CD8-positive, alpha-beta T cell (primary cell): ENCODE measurements at regions of chr5 and their contacts with region 1.

Region 1: DNA sequence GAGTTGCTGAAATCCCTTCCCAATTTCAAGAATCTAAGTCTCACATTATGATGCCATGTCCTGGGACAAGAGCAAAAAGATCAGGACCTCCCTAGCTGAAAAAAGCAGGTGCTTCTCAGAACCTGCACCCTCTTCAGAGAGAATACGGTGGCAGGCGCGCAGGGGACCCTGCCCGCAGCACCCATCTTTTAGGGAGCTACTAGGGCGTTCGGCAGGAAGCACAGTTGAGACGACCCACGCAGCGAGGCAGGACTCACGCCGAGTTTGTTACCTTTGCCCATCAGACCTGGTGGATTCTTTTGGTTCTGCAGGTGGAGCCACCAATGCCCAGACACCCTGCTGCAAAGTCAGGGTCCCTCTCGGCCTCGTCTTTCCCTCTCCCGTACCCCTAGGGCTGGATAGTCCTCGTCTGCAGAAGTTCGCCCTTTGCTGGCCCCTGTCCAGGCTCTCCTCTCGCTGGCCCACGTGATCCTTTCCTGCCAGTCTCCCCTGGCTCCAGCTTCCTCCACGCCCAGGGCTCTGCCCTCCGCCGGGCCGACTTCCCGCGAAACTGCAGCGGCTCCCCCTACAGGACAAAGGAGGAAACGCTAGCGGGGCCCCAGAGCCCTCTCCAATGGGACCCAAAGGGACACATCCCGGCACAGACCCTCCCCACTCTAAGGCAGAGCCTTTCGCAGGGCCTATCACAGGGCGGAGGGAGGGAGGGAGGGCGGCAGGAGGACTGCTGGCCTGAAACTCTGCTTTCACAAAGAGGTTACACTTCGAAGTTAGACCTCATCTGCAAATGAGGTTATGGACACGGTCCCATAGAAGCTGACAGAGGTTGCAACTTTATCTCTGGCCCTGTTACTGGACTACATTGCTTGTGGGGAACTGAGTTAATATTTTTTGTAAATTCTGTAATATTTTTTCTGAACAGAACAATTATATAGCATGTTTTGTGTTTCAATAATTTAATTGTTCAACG is 28.8 kb downstream of the TMEM174 start:
- DNase-seq: peak; percentile 35 to 81 (median 68)
- ATAC-seq: peak; percentile 89
- H3K4me3 ChIP-seq: no peak overlapping the region
- H3K4me3 Mint-ChIP-seq: peak overlapping the region; percentile 20
- H3K27ac ChIP-seq: no peak overlapping the region
- H3K27ac Mint-ChIP-seq: no peak overlapping the region
- H3K4me1 ChIP-seq: peaks cover 14% of the 10 kb centered on the region
- H3K4me1 Mint-ChIP-seq: peaks cover 10% of the 10 kb centered on the region
- H3K27me3 ChIP-seq: peaks cover 3 to 9% of the 10 kb centered on the region in 2 experiments
- H3K27me3 Mint-ChIP-seq: peaks cover 68% of the 10 kb centered on the region
- CTCF ChIP-seq: peak; percentile 84

Region 2: GRCh38 chr5:71802673-71803072 is 1399.2 kb before region 1 on chr5:
- CTCF ChIA-PET with region 1: no interaction called
- POLR2A ChIA-PET with region 1: no interaction called
- intact Hi-C with region 1: no loop called
- DNase-seq: no peak
- ATAC-seq: no peak
- H3K4me3 ChIP-seq: no peak overlapping the region
- H3K4me3 Mint-ChIP-seq: no peak overlapping the region
- H3K27ac ChIP-seq: no peak overlapping the region
- H3K27ac Mint-ChIP-seq: no peak overlapping the region
- H3K4me1 ChIP-seq: no peaks in the 10 kb centered on the region
- H3K4me1 Mint-ChIP-seq: no peaks in the 10 kb centered on the region
- H3K27me3 ChIP-seq: no peaks in the 10 kb centered on the region
- H3K27me3 Mint-ChIP-seq: peaks cover 20% of the 10 kb centered on the region
- CTCF ChIP-seq: no peak

Region 3: GRCh38 chr5:71982717-71983395 is 1219.0 kb before region 1 on chr5:
- CTCF ChIA-PET with region 1: no interaction called
- POLR2A ChIA-PET with region 1: no interaction called
- intact Hi-C with region 1: no loop called
- DNase-seq: no peak
- ATAC-seq: no peak
- H3K4me3 ChIP-seq: no peak overlapping the region
- H3K4me3 Mint-ChIP-seq: no peak overlapping the region
- H3K27ac ChIP-seq: no peak overlapping the region
- H3K27ac Mint-ChIP-seq: no peak overlapping the region
- H3K4me1 ChIP-seq: no peaks in the 10 kb centered on the region
- H3K4me1 Mint-ChIP-seq: no peaks in the 10 kb centered on the region
- H3K27me3 ChIP-seq: no peaks in the 10 kb centered on the region
- H3K27me3 Mint-ChIP-seq: peaks cover 12% of the 10 kb centered on the region
- CTCF ChIP-seq: no peak

Region 4: DNA sequence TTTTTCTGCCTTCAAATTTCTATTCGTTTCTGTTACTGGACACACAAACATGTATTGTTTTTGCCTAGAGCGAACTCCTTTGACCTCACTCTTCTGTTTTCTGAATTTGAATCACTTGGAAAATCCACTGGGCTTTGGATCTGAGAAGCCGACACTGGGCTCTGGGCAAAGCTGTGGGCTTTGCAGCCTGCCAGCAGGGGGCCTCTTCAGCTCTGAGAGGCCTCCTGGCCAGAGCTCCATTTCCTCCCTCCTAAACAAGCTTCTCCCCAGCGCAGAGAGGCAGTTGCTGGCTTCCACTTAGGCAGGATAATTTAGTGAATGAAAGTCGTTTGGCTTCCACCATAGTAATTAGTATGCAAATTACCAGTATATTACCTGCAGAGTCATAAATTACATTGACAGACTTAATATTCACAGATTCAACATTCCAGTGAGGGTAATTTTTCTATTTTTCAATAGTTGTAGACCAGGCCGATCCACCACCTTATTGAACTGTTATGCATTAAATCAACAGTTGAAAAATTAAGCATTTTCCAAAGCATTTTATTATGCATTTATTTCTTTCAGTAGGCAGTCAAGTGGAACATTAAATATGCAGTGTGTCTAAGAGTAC is 590.6 kb before region 1 on chr5:
- CTCF ChIA-PET with region 1: interaction called, 3 read pairs
- POLR2A ChIA-PET with region 1: no interaction called
- intact Hi-C with region 1: loop called in 1 of 2 experiments (anchors 2 kb)
- DNase-seq: peak; percentile 1 to 56 (median 34)
- ATAC-seq: peak; percentile 62
- H3K4me3 ChIP-seq: no peak overlapping the region
- H3K4me3 Mint-ChIP-seq: no peak overlapping the region
- H3K27ac ChIP-seq: no peak overlapping the region
- H3K27ac Mint-ChIP-seq: no peak overlapping the region
- H3K4me1 ChIP-seq: no peaks in the 10 kb centered on the region
- H3K4me1 Mint-ChIP-seq: no peaks in the 10 kb centered on the region
- H3K27me3 ChIP-seq: no peaks in the 10 kb centered on the region
- H3K27me3 Mint-ChIP-seq: peaks cover 10% of the 10 kb centered on the region
- CTCF ChIP-seq: peak; percentile 74

Region 5: DNA sequence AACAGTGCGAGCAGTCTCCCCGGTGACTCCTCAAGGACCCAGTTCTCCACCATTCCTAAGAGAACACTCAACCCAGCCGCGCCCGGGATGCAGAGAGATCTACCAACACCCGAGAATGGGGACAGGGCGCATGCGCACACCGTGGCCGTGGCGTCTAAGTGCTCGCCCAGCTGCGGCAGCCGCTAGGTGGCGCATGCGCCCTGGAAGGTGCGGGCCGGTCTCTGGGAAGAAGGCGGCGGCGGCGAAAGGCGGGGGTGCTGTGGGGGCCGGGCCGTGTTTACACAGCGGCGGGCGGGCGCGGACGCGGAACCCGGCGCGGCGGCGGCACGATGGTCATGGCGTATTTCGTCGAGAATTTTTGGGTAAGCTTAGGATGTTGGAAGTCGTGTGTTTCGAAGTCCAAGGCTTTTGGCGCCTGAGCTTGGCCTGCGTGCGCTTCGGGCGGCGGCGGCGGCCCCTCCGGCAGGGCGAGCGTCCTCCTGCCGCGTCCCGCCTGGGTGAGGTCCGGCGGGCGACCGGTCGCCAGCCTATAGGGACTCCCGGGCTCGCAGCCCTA is 246.0 kb before region 1 on chr5 and contains the start of gene FCHO2:
- CTCF ChIA-PET with region 1: interaction called, 10 read pairs
- POLR2A ChIA-PET with region 1: interaction called, 3 read pairs
- intact Hi-C with region 1: loop called (anchors 1 to 5 kb)
- DNase-seq: peak; percentile 88 to 98 (median 96)
- ATAC-seq: peak; percentile 90
- H3K4me3 ChIP-seq: peak within 1 kb of the TSS; percentile 61 to 95
- H3K4me3 Mint-ChIP-seq: peak within 1 kb of the TSS; percentile 95
- H3K27ac ChIP-seq: no peak within 1 kb of the TSS
- H3K27ac Mint-ChIP-seq: peak within 1 kb of the TSS; percentile 88
- H3K4me1 ChIP-seq: peaks cover 12% of the 10 kb centered on the region
- H3K4me1 Mint-ChIP-seq: peaks cover 15% of the 10 kb centered on the region
- H3K27me3 ChIP-seq: peaks cover 6 to 9% of the 10 kb centered on the region in 2 experiments
- H3K27me3 Mint-ChIP-seq: peaks cover 41% of the 10 kb centered on the region
- CTCF ChIP-seq: peak; percentile 65
- total RNA-seq, gene FCHO2: 2.4 to 2.9 TPM

Region 6: GRCh38 chr5:73135429-73136054 is 66.3 kb before region 1 on chr5:
- CTCF ChIA-PET with region 1: interaction called, 3 read pairs
- POLR2A ChIA-PET with region 1: no interaction called
- intact Hi-C with region 1: loop called in 1 of 2 experiments (anchors 2 kb)
- DNase-seq: peak in 2 of 9 experiments; percentile 19 to 52
- ATAC-seq: peak; percentile 42
- H3K4me3 ChIP-seq: no peak overlapping the region
- H3K4me3 Mint-ChIP-seq: no peak overlapping the region
- H3K27ac ChIP-seq: no peak overlapping the region
- H3K27ac Mint-ChIP-seq: no peak overlapping the region
- H3K4me1 ChIP-seq: no peaks in the 10 kb centered on the region
- H3K4me1 Mint-ChIP-seq: peaks cover 3% of the 10 kb centered on the region
- H3K27me3 ChIP-seq: peaks cover 0 to 8% of the 10 kb centered on the region in 2 experiments
- H3K27me3 Mint-ChIP-seq: peaks cover 39% of the 10 kb centered on the region
- CTCF ChIP-seq: peak; percentile 28

Region 7: GRCh38 chr5:73215891-73216610 is 14.2 kb after region 1 on chr5:
- CTCF ChIA-PET with region 1: interaction called, 16 read pairs
- POLR2A ChIA-PET with region 1: no interaction called
- intact Hi-C with region 1: no loop called
- DNase-seq: peak; percentile 36 to 77 (median 56)
- ATAC-seq: peak; percentile 95
- H3K4me3 ChIP-seq: peak overlapping the region; percentile 13 to 39
- H3K4me3 Mint-ChIP-seq: peak overlapping the region; percentile 69
- H3K27ac ChIP-seq: no peak overlapping the region
- H3K27ac Mint-ChIP-seq: no peak overlapping the region
- H3K4me1 ChIP-seq: peaks cover 9% of the 10 kb centered on the region
- H3K4me1 Mint-ChIP-seq: peaks cover 11% of the 10 kb centered on the region
- H3K27me3 ChIP-seq: peaks cover 15 to 27% of the 10 kb centered on the region in 2 experiments
- H3K27me3 Mint-ChIP-seq: peaks cover 76% of the 10 kb centered on the region
- CTCF ChIP-seq: peak; percentile 65

Region 8: GRCh38 chr5:73370640-73371583 is 169.1 kb after region 1 on chr5:
- CTCF ChIA-PET with region 1: no interaction called
- POLR2A ChIA-PET with region 1: no interaction called
- intact Hi-C with region 1: no loop called
- DNase-seq: no peak
- ATAC-seq: no peak
- H3K4me3 ChIP-seq: no peak overlapping the region
- H3K4me3 Mint-ChIP-seq: no peak overlapping the region
- H3K27ac ChIP-seq: no peak overlapping the region
- H3K27ac Mint-ChIP-seq: no peak overlapping the region
- H3K4me1 ChIP-seq: no peaks in the 10 kb centered on the region
- H3K4me1 Mint-ChIP-seq: no peaks in the 10 kb centered on the region
- H3K27me3 ChIP-seq: peaks cover 0 to 3% of the 10 kb centered on the region in 2 experiments
- H3K27me3 Mint-ChIP-seq: peaks cover 47% of the 10 kb centered on the region
- CTCF ChIP-seq: no peak